ENCODE measurements at regions of chr1 and their contacts with region 1.

Region 1: DNA sequence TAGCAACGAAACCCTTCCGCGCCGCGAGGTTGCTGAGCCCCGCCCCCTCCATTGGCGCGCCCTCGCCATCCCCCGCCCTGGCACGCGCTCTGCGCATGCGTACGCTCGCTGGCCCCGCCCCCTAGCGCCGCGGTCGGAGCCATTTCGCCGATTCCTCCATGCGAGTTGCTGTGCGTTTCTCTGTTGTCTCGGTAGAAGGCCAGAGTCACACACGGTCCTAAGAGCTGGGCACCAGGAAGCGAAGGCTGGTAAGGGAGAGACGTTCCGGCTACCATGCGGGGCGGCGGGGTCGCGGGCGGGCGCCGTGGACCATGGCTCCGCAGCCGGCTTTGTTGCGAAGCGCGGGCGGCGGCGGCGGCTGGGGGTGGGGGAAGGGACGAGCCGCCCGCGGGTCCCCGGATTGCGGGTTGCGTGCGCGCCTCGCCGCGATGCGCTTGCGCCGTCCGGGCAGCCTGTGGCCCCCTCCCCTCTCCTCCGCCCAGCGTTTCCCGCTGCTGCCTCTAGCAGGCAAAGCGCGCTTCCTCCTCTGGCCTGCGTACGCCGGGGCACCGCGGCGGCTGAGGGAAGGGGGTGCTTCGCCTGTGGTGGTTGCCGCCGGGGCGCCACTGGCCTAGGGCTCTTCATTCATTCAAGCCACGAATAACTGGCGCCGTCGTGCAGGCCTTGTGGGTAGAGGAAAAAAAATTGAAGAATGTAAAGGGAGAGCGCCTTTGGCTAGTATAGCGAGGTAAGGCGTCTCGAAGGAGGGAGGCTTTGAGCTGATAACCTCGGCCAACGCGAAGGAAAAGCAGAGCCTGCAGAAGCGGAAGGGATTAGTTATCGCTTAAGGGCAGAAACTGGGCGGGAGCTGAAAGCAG is at the start of gene DHX9:
- DNase-seq: peak; percentile 96
- H3K4me3 Mint-ChIP-seq: peak within 1 kb of the TSS; percentile 98
- H3K27ac Mint-ChIP-seq: peak within 1 kb of the TSS; percentile 97
- H3K4me1 Mint-ChIP-seq: peaks cover 38% of the 10 kb centered on the region
- H3K27me3 Mint-ChIP-seq: no peaks in the 10 kb centered on the region
- total RNA-seq, gene DHX9: 212 to 215 TPM

Region 2: DNA sequence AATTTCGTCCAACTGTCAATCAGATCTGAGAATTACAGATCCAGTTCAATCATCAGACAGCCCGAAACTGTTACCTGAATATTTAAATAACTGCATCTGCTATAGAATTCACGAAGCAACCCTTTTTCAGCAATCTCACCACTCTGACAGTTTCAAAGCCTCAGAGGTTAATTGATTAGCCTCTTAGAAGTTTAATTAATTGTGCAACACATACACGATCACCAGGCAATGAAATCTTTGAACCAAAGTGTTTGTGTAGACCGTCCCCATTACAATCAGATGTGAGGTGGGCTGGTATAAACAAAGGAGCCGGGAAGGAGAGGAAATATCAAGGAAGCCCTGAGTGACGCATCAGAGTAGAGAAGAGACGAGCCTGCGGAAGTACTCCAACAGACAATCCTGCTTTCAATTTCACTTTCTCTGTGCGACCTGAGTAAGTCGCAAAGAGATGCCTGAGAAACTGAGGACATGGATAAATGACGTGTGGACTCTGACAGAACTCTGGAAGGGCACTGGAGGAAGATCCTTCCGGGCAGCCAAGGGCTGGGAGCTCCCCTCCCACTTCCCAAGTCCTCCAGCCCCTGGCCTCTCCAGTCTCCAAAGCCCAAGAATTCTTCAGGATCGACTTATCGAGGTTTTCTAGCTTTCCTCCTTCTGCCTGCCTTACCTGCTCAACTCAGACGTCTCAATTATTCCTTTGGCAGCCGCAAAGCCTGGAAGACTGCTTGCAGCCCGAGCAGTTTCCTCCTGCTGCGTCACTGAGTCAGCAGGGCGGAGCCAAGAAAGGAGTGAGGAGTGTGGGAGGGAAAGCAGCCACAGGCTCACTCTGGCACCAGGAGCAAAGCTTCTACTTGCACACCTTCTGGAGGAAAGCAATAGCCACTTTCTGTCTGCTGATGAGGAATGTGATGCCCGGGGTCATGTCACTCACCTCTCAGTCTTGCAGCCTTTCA is 250.7 kb before region 1 on chr1 and contains the start of gene RNASEL:
- CTCF ChIA-PET with region 1: interaction called, 6 read pairs
- POLR2A ChIA-PET with region 1: interaction called, 3 read pairs
- intact Hi-C with region 1: loop called (anchors 1 kb)
- DNase-seq: peak; percentile 74
- H3K4me3 Mint-ChIP-seq: peak within 1 kb of the TSS; percentile 94
- H3K27ac Mint-ChIP-seq: peak within 1 kb of the TSS; percentile 99
- H3K4me1 Mint-ChIP-seq: peaks cover 46% of the 10 kb centered on the region
- H3K27me3 Mint-ChIP-seq: no peaks in the 10 kb centered on the region
- total RNA-seq, gene RNASEL: 4.5 TPM

Region 3: GRCh38 chr1:182789138-182790076 is 50.0 kb before region 1 on chr1 and contains the start of gene NPL:
- CTCF ChIA-PET with region 1: interaction called, 4 read pairs
- POLR2A ChIA-PET with region 1: interaction called, 3 read pairs
- intact Hi-C with region 1: loop called (anchors 1 kb)
- DNase-seq: peak; percentile 90
- H3K4me3 Mint-ChIP-seq: peak within 1 kb of the TSS; percentile 80
- H3K27ac Mint-ChIP-seq: no peak within 1 kb of the TSS
- H3K4me1 Mint-ChIP-seq: peaks cover 13% of the 10 kb centered on the region
- H3K27me3 Mint-ChIP-seq: no peaks in the 10 kb centered on the region
- total RNA-seq, gene NPL: 3.8 to 7.8 TPM

Region 4: DNA sequence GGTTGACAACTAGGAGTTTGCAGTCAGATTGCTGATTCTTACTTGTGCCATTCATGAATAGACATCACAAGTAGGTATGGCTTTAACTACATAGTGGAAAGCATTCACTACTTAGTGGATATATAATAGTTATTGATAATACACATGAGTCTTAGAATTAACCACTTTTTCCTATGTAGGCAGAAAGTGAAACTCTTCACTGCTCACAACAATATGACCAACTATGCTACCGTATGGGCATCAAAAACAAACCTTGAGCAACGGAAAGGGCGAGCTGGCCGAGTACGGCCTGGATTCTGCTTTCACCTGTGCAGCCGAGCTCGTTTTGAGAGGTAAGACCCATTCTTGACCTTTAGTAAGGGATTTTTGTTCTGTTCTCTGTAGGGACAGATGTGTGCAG is 38.4 kb after region 1 on chr1:
- CTCF ChIA-PET with region 1: no interaction called
- POLR2A ChIA-PET with region 1: interaction called, 3 read pairs
- intact Hi-C with region 1: loop called (anchors 5 kb)
- DNase-seq: peak; percentile 47
- H3K4me3 Mint-ChIP-seq: no peak overlapping the region
- H3K27ac Mint-ChIP-seq: peak overlapping the region; percentile 64
- H3K4me1 Mint-ChIP-seq: peaks cover 29% of the 10 kb centered on the region
- H3K27me3 Mint-ChIP-seq: no peaks in the 10 kb centered on the region

Measured in activated CD4-positive, alpha-beta memory T cell treated with anti-CD3 and anti-CD28 coated beads for 36 hours (primary cell).